IMR-90 (cell line): ENCODE measurements at regions of chr17 and their contacts with region 1.

Region 1: DNA sequence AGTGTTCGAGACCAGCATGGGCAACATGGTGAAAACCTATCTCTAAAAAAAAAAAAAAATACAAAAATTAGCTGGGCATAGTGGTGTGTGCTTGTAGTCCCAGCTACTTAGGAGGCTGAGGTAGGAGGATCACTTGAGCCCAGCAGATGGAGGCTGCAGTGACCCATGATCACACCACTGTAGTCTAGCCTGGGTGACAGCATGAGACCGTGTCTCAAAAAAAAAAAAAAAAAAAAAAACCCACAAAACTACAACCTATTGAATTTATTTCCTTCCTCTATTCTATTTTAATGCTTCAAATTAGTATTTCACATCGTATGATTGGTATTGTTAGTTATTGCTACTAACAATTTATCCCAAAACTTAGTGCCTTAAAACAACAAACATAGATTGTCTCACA is 9.4 kb upstream of the NUFIP2 start:
- DNase-seq: no peak
- ATAC-seq: no peak
- H3K4me3 ChIP-seq: no peak overlapping the region
- H3K27ac ChIP-seq: no peak overlapping the region
- H3K4me1 ChIP-seq: no peaks in the 10 kb centered on the region
- H3K27me3 ChIP-seq: no peaks in the 10 kb centered on the region; the same call in 1 of the 2 replicates
- CTCF ChIP-seq: no peak
- POLR2A ChIP-seq: no peak
- RAD21 ChIP-seq: no peak

Region 2: GRCh38 chr17:29341751-29342150 is 38.4 kb after region 1 on chr17:
- CTCF ChIA-PET with region 1: no interaction called
- POLR2A ChIA-PET with region 1: no interaction called
- dilution Hi-C with region 1: no loop called
- in situ Hi-C with region 1: loop called (anchors 5 kb)
- intact Hi-C with region 1: loop called (anchors 5 kb)
- DNase-seq: peak; percentile 16
- ATAC-seq: no peak
- H3K4me3 ChIP-seq: no peak overlapping the region
- H3K27ac ChIP-seq: no peak overlapping the region
- H3K4me1 ChIP-seq: no peaks in the 10 kb centered on the region
- H3K27me3 ChIP-seq: peaks cover 17% of the 10 kb centered on the region
- CTCF ChIP-seq: no peak
- POLR2A ChIP-seq: no peak
- RAD21 ChIP-seq: no peak

Region 3: DNA sequence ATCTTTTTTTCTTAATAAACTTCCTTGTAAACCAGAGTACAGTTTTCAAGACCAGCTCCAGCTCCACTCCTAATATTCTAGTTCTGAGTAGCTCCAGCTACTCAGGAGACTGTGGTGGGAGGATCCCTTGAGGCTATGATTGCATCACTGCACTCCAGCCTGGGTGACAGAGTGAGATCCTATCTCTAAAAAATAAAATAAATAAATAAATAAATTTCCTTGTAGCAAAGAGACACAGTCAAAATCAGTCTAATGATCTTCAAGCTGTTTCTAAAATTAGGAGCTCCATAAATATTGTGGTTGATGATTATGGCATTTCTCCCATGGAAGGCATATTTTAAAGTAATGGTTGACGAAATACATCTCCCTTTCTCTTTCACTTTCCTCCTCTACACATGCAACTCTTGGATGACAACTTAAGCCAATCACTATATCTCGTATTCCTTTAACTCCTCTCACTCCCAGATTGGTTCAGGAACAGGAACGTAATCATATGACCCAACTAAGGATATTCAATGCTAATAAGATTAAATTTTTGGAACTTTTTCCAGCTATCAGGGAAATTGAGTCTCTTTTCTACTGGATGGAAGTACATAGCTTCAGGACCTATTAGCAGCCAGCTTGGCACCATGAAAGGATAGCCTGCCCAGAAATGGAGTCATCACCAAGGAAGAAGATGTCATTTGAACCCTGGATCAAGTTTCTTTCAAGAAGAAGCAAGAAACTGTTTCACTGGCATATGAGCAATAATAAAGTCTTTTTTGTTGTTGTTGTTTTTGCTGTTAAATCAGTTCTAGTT is 44.6 kb after region 1 on chr17:
- CTCF ChIA-PET with region 1: no interaction called
- POLR2A ChIA-PET with region 1: no interaction called
- dilution Hi-C with region 1: no loop called
- in situ Hi-C with region 1: no loop called
- intact Hi-C with region 1: loop called (anchors 5 kb)
- DNase-seq: no peak
- ATAC-seq: no peak; the same call in 1 of the 2 replicates
- H3K4me3 ChIP-seq: no peak overlapping the region
- H3K27ac ChIP-seq: no peak overlapping the region
- H3K4me1 ChIP-seq: no peaks in the 10 kb centered on the region
- H3K27me3 ChIP-seq: peaks cover 6% of the 10 kb centered on the region
- CTCF ChIP-seq: no peak
- POLR2A ChIP-seq: no peak
- RAD21 ChIP-seq: no peak